Ovary (tissue), 10 donors: ENCODE measurements at regions of chr19 and their contacts with region 1.

Region 1: GRCh38 chr19:53896682-53897081 is 12.4 kb upstream of the CACNG7 start:
- DNase-seq: no peak
- H3K4me3 ChIP-seq: no peak overlapping the region
- H3K27ac ChIP-seq: no peak overlapping the region
- H3K4me1 ChIP-seq: no peaks in the 10 kb centered on the region
- H3K27me3 ChIP-seq: no peaks in the 10 kb centered on the region
- CTCF ChIP-seq: no peak
- EP300 ChIP-seq: no peak
- POLR2A ChIP-seq: no peak

Region 2: DNA sequence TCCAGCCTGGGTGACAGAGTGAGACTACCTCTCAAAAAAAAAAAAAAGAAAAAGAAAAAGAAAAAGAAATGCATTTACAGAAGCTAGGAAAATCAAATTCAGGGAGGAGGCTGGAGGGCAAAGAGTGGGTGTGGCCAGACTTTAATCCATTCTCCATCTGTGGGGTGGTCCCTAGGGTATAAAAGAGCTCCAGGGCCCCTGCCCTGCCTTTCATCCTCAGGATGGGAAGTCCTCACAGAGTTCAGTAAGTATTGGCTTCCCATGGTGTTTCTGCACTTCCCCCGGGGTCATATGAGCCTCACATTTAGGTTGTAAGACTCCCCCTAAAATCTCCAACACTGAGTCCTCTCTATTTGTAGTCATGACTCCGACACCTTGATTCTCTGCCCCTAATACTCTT is 231.9 kb before region 1 on chr19:
- intact Hi-C with region 1: no loop called
- DNase-seq: no peak
- H3K4me3 ChIP-seq: no peak overlapping the region
- H3K27ac ChIP-seq: no peak overlapping the region
- H3K4me1 ChIP-seq: no peaks in the 10 kb centered on the region
- H3K27me3 ChIP-seq: no peaks in the 10 kb centered on the region
- CTCF ChIP-seq: no peak
- EP300 ChIP-seq: no peak
- POLR2A ChIP-seq: no peak

Region 3: DNA sequence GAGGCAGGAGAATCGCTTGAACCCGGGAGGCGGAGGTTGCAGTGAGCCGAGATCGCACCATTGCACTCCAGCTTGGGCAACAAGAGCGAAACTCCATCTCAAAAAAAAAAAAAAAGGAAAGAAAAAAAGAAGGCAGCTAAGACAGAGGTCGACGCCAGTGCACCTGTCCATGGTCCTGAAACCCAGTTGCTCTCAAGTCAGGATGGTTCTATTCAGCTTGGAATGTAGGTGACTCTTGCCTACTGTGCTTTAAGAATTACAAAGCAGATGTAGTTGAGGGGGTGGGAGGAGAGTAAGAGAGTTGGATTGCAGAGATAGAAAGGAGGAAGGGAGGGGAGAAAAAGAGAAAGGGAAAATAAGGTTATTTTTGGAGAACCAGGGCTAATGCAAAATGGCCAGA is 31.1 kb after region 1 on chr19:
- intact Hi-C with region 1: loop called in 1 of 4 experiments (anchors 1 kb)
- DNase-seq: no peak
- H3K4me3 ChIP-seq: no peak overlapping the region
- H3K27ac ChIP-seq: no peak overlapping the region
- H3K4me1 ChIP-seq: no peaks in the 10 kb centered on the region
- H3K27me3 ChIP-seq: no peaks in the 10 kb centered on the region
- CTCF ChIP-seq: no peak
- EP300 ChIP-seq: no peak
- POLR2A ChIP-seq: no peak